Gastrocnemius medialis (tissue), 4 donors: ENCODE measurements at regions of chr2 and their contacts with region 1.

Region 1: DNA sequence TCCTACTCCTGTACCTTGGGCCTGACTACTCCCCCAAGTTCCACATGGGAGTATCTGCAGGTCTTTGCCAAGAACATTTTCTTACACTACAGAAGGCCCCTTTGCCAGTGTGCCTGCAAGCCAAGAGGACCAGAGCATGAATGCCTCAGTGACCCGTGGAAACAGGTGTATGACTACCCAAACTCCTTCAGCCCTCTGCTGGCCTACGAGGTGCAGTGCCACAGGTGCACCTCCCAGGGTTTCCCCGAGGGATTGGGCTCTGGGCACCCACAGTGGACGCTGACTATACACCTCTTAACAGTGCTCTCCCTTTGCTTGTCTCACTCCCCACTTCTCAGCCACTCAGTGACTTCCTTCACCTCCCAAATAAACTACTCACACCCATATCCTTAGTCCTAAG is 91.4 kb downstream of the COL6A3 start:
- DNase-seq: no peak
- ATAC-seq: peak in 1 of 2 donors; percentile 42
- H3K4me3 ChIP-seq: no peak overlapping the region
- H3K27ac ChIP-seq: peak overlapping the region; percentile 48 to 72 (median 60)
- H3K4me1 ChIP-seq: peaks cover 12 to 31% of the 10 kb centered on the region in 2 donors
- H3K27me3 ChIP-seq: no peaks in the 10 kb centered on the region
- CTCF ChIP-seq: peak; percentile 12 to 57 (median 45)
- POLR2A ChIP-seq: no peak

Region 2: GRCh38 chr2:237165405-237166276 is 156.9 kb before region 1 on chr2:
- in situ Hi-C with region 1: no loop called
- intact Hi-C with region 1: loop called (anchors 5 kb)
- DNase-seq: no peak
- ATAC-seq: no peak
- H3K4me3 ChIP-seq: no peak overlapping the region
- H3K27ac ChIP-seq: no peak overlapping the region
- H3K4me1 ChIP-seq: no peaks in the 10 kb centered on the region
- H3K27me3 ChIP-seq: no peaks in the 10 kb centered on the region
- CTCF ChIP-seq: peak in 4 of 5 experiments; percentile 19 to 47 (median 31)
- POLR2A ChIP-seq: no peak

Region 3: GRCh38 chr2:237456200-237456843 is 133.8 kb after region 1 on chr2:
- in situ Hi-C with region 1: no loop called
- intact Hi-C with region 1: no loop called
- DNase-seq: peak; percentile 92 to 98
- ATAC-seq: peak; percentile 84 to 87
- H3K4me3 ChIP-seq: no peak overlapping the region
- H3K27ac ChIP-seq: peak overlapping the region; percentile 71 to 85 (median 81)
- H3K4me1 ChIP-seq: peaks cover 26 to 38% of the 10 kb centered on the region in 2 donors
- H3K27me3 ChIP-seq: no peaks in the 10 kb centered on the region
- CTCF ChIP-seq: no peak
- POLR2A ChIP-seq: no peak